Naive thymus-derived CD4-positive, alpha-beta T cell (primary cell): ENCODE measurements at regions of chr6 and their contacts with region 1.

Region 1: GRCh38 chr6:26285143-26286134 is 79.6 kb upstream of the BTN3A2 start:
- DNase-seq: peak; percentile 72 to 97 (median 92)
- ATAC-seq: peak; percentile 91
- H3K4me3 ChIP-seq: peak overlapping the region; percentile 88
- H3K4me3 Mint-ChIP-seq: peak overlapping the region; percentile 86 to 96 (median 90)
- H3K27ac ChIP-seq: peak overlapping the region; percentile 91
- H3K27ac Mint-ChIP-seq: peak overlapping the region; percentile 91 to 100 (median 98)
- H3K4me1 ChIP-seq: peaks cover 0 to 8% of the 10 kb centered on the region in 2 donors
- H3K4me1 Mint-ChIP-seq: peaks cover 7 to 48% (median 33%) of the 10 kb centered on the region in 7 donors
- H3K27me3 ChIP-seq: no peaks in the 10 kb centered on the region
- H3K27me3 Mint-ChIP-seq: peaks cover 0 to 9% (median 5%) of the 10 kb centered on the region in 5 donors

Region 2: DNA sequence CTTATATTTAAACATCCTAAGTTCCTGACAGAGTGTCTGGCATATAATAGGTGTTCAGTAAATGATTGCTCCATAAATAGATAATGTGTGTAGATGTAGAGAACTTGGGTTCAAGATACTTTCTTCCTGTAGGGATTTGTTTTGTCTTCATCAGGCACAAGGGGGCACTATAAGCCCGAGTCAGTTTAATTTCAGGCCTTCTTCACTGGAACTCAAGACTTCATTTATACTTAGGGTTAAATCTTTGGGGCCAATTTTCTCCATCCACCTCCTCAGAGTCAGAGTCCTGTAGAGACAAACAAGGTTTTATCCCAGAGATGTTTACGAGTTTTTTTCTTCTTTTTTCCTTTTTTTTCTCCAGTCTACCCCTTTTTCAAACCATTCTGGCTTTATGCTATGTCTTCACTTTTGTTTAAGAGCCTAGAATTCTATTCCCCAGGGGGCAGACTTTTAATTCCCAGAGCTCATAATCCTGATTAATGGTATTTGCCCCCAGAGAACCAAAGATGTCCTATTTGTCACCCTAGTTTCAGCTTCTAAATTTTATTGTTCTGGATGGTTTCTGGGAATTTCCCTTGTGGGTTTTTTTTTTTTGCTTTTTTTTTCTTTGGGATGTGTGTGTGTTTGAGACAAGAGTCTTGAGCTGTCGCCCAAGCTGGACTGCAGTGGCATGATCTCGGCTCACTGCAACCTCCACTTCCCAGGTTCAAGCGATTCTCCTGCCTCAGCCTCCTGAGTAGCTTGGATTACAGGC is 109.8 kb before region 1 on chr6:
- CTCF ChIA-PET with region 1: no interaction called
- POLR2A ChIA-PET with region 1: interaction called, 35 read pairs
- intact Hi-C with region 1: loop called (anchors 1 kb)
- DNase-seq: peak in 7 of 9 donors; percentile 57 to 75 (median 66)
- ATAC-seq: peak; percentile 32
- H3K4me3 ChIP-seq: no peak overlapping the region
- H3K4me3 Mint-ChIP-seq: peak overlapping the region in 7 of 10 donors; percentile 15 to 63 (median 43)
- H3K27ac ChIP-seq: no peak overlapping the region
- H3K27ac Mint-ChIP-seq: peak overlapping the region; percentile 32 to 89 (median 76)
- H3K4me1 ChIP-seq: peaks cover 16 to 19% of the 10 kb centered on the region in 2 donors
- H3K4me1 Mint-ChIP-seq: peaks cover 20 to 51% (median 39%) of the 10 kb centered on the region in 7 donors
- H3K27me3 ChIP-seq: no peaks in the 10 kb centered on the region
- H3K27me3 Mint-ChIP-seq: no peaks in the 10 kb centered on the region

Region 3: GRCh38 chr6:26223650-26224546 is 61.5 kb before region 1 on chr6:
- CTCF ChIA-PET with region 1: no interaction called
- POLR2A ChIA-PET with region 1: interaction called, 37 read pairs
- intact Hi-C with region 1: loop called in 1 of 2 experiments (anchors 1 kb)
- DNase-seq: peak in 7 of 9 donors; percentile 79 to 89 (median 84)
- ATAC-seq: peak; percentile 93
- H3K4me3 ChIP-seq: peak overlapping the region; percentile 77
- H3K4me3 Mint-ChIP-seq: no peak overlapping the region
- H3K27ac ChIP-seq: peak overlapping the region; percentile 77
- H3K27ac Mint-ChIP-seq: no peak overlapping the region
- H3K4me1 ChIP-seq: peaks cover 14 to 18% of the 10 kb centered on the region in 2 donors
- H3K4me1 Mint-ChIP-seq: peaks cover 10 to 25% (median 18%) of the 10 kb centered on the region in 7 donors
- H3K27me3 ChIP-seq: no peaks in the 10 kb centered on the region
- H3K27me3 Mint-ChIP-seq: no peaks in the 10 kb centered on the region

Region 4: DNA sequence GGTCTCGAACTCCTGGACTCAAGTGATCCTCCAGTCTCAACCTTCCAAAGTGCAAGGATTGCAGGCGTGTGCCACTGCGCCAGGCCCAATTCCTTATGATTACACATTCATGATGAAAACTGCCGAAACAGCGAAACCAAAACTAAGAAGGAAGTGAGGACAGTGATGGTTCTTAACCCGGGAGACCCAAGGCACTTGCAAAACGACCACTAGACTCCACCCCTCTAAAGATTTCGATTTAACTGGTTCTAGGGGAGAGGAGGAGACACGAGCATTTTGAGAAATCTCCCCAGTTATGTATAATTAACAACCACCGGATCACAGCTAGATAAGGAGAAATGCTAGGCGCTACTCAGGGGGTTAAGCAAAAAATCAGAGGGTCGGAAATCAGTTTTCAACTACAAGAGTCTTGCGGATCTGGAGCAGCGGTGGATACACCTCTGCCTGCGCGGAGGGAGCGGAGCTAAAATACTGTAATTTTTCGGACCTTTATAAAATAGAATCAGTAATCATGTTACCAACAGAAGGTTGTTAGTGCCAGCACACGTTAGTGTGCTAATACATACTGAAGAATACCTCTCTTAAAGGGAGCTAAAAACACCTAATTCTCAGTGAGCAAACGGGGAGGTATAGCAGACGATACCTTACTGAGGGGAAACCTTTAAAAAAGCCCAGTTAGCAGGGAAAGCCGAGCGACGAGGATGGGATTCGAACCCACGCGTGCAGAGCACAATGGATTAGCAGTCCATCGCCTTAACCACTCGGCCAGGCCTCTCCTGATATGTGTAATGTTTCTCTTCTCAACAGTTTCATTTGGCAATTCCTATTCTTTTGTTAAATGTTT is 19.6 kb after region 1 on chr6:
- CTCF ChIA-PET with region 1: no interaction called
- POLR2A ChIA-PET with region 1: interaction called, 26 read pairs
- intact Hi-C with region 1: loop called (anchors 1 kb)
- DNase-seq: peak; percentile 36 to 80 (median 55)
- ATAC-seq: peak; percentile 83
- H3K4me3 ChIP-seq: peak overlapping the region; percentile 72
- H3K4me3 Mint-ChIP-seq: peak overlapping the region; percentile 85 to 95 (median 92)
- H3K27ac ChIP-seq: peak overlapping the region; percentile 61
- H3K27ac Mint-ChIP-seq: peak overlapping the region; percentile 62 to 96 (median 92)
- H3K4me1 ChIP-seq: peaks cover 0 to 10% of the 10 kb centered on the region in 2 donors
- H3K4me1 Mint-ChIP-seq: peaks cover 11 to 47% (median 24%) of the 10 kb centered on the region in 7 donors
- H3K27me3 ChIP-seq: no peaks in the 10 kb centered on the region
- H3K27me3 Mint-ChIP-seq: no peaks in the 10 kb centered on the region

Region 5: GRCh38 chr6:26473758-26474438 is 188.5 kb after region 1 on chr6:
- CTCF ChIA-PET with region 1: no interaction called
- POLR2A ChIA-PET with region 1: interaction called, 5 read pairs
- intact Hi-C with region 1: loop called (anchors 1 to 5 kb)
- DNase-seq: peak; percentile 37 to 94 (median 90)
- ATAC-seq: peak; percentile 96
- H3K4me3 ChIP-seq: peak overlapping the region; percentile 67
- H3K4me3 Mint-ChIP-seq: peak overlapping the region; percentile 88 to 100 (median 97)
- H3K27ac ChIP-seq: peak overlapping the region; percentile 91
- H3K27ac Mint-ChIP-seq: peak overlapping the region; percentile 98 to 100 (median 100)
- H3K4me1 ChIP-seq: peaks cover 33% of the 10 kb centered on the region in 2 donors
- H3K4me1 Mint-ChIP-seq: peaks cover 41 to 72% (median 64%) of the 10 kb centered on the region in 7 donors
- H3K27me3 ChIP-seq: no peaks in the 10 kb centered on the region
- H3K27me3 Mint-ChIP-seq: no peaks in the 10 kb centered on the region

Region 6: DNA sequence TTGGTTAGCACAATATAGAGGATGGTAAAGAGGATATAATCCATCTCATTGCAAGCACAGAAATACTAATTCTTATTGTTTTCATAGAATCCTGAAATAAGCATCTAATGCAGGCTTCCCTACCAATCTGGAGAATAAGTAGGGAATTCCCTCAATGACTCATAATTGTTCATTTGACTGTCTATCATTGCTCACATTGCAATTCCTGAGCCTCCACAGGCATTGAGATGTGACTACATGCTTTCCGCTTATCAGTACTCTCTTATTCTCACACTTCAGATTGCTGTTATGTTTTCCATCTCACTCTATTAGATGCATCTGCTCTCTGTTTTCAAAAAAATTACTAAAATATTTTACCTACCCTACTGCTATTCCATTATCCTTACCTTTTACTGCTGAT is 745.9 kb after region 1 on chr6:
- CTCF ChIA-PET with region 1: no interaction called
- POLR2A ChIA-PET with region 1: no interaction called
- intact Hi-C with region 1: no loop called
- DNase-seq: no peak
- ATAC-seq: no peak
- H3K4me3 ChIP-seq: no peak overlapping the region
- H3K4me3 Mint-ChIP-seq: no peak overlapping the region
- H3K27ac ChIP-seq: no peak overlapping the region
- H3K27ac Mint-ChIP-seq: no peak overlapping the region
- H3K4me1 ChIP-seq: no peaks in the 10 kb centered on the region
- H3K4me1 Mint-ChIP-seq: no peaks in the 10 kb centered on the region
- H3K27me3 ChIP-seq: peaks cover 3 to 6% of the 10 kb centered on the region in 2 donors
- H3K27me3 Mint-ChIP-seq: peaks cover 9 to 62% (median 62%) of the 10 kb centered on the region in 5 donors

Region 7: DNA sequence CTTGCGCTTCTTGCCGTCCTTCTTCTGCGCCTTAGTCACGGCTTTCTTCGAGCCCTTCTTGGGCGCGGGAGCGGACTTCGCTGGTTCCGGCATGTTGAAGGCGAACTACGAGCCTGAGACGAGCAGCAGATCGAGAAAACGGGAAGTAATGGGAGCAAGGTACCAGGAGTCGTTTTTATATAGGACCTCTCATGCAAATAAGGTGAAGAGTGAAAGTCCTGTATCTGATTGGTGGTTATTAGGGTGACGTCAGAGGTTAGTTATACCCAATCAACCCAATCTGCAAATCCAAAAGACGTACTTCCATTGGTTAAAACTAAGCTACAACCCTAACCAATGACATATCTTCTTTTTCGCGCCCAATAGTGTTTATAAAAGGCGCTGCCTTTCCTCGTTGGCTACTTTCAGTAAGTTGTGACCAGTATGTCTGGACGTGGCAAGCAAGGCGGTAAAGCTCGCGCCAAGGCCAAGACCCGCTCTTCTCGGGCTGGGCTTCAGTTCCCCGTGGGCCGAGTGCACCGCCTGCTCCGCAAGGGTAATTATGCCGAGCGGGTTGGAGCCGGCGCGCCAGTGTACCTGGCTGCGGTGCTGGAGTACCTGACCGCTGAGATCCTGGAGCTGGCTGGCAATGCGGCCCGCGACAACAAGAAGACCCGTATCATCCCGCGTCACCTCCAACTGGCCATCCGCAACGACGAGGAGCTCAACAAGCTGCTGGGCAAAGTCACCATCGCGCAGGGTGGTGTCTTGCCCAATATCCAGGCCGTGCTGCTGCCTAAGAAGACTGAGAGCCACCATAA is 861.5 kb after region 1 on chr6:
- CTCF ChIA-PET with region 1: no interaction called
- POLR2A ChIA-PET with region 1: interaction called, 12 read pairs
- intact Hi-C with region 1: loop called (anchors 1 kb)
- DNase-seq: peak; percentile 71 to 96 (median 92)
- ATAC-seq: peak; percentile 92
- H3K4me3 ChIP-seq: peak overlapping the region; percentile 90
- H3K4me3 Mint-ChIP-seq: no peak overlapping the region
- H3K27ac ChIP-seq: peak overlapping the region; percentile 89
- H3K27ac Mint-ChIP-seq: no peak overlapping the region
- H3K4me1 ChIP-seq: peaks cover 6 to 7% of the 10 kb centered on the region in 2 donors
- H3K4me1 Mint-ChIP-seq: peaks cover 0 to 26% (median 14%) of the 10 kb centered on the region in 7 donors
- H3K27me3 ChIP-seq: no peaks in the 10 kb centered on the region
- H3K27me3 Mint-ChIP-seq: no peaks in the 10 kb centered on the region